A673 (cell line): ENCODE measurements at regions of chr11 and their contacts with region 1.

Region 1: GRCh38 chr11:134343646-134344045 is 11.9 kb downstream of the GLB1L2 start:
- DNase-seq: no peak
- H3K4me3 ChIP-seq: no peak overlapping the region
- H3K27ac ChIP-seq: no peak overlapping the region
- H3K4me1 ChIP-seq: no peaks in the 10 kb centered on the region
- H3K27me3 ChIP-seq: no peaks in the 10 kb centered on the region
- CTCF ChIP-seq: no peak

Region 2: GRCh38 chr11:134276396-134277182 is 67.1 kb before region 1 on chr11:
- CTCF ChIA-PET with region 1: no interaction called
- POLR2A ChIA-PET with region 1: no interaction called
- intact Hi-C with region 1: loop called (anchors 1 kb)
- DNase-seq: no peak
- H3K4me3 ChIP-seq: peak overlapping the region; percentile 41
- H3K27ac ChIP-seq: no peak overlapping the region
- H3K4me1 ChIP-seq: no peaks in the 10 kb centered on the region
- H3K27me3 ChIP-seq: peaks cover 94% of the 10 kb centered on the region
- CTCF ChIP-seq: no peak

Region 3: GRCh38 chr11:134837887-134838232 is 494.2 kb after region 1 on chr11:
- CTCF ChIA-PET with region 1: no interaction called
- POLR2A ChIA-PET with region 1: no interaction called
- intact Hi-C with region 1: no loop called
- DNase-seq: no peak
- H3K4me3 ChIP-seq: no peak overlapping the region
- H3K27ac ChIP-seq: no peak overlapping the region
- H3K4me1 ChIP-seq: no peaks in the 10 kb centered on the region
- H3K27me3 ChIP-seq: peaks cover 5% of the 10 kb centered on the region
- CTCF ChIP-seq: no peak